GM13977 (cell line): ENCODE measurements at regions of chr2 and their contacts with region 1.

Region 1: DNA sequence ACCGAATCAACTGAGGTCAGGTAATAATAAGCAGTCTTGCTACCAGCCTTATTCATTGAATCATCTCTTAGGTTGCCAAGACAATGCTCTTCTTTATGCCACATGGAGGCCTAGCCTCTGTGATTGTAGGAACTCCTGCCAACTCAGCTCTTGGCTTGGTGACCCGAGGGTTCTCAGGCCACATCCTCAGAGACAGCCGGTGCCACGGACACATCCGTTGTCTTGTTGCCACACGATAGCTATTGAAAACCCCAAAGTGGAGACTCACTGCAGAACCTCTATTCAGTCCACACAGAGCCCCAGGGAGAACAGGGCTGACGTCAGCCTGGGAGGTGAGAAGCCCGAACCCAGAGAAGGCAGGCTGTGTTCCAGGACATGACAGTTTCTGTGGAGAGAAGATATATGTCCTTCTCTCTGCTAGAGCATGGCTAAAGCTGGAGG is 53.5 kb upstream of the TGFA start:
- DNase-seq: no peak
- CTCF ChIP-seq: no peak

Region 2: GRCh38 chr2:70703900-70704549 is 96.9 kb after region 1 on chr2:
- in situ Hi-C with region 1: loop called (anchors 25 kb)
- DNase-seq: no peak
- CTCF ChIP-seq: no peak